WTC11 (cell line): ENCODE measurements at regions of chr1 and their contacts with region 1.

Region 1: GRCh38 chr1:202710070-202711045 is at the start of gene SYT2:
- DNase-seq: peak; percentile 78
- ATAC-seq: peak; percentile 41
- H3K4me3 Mint-ChIP-seq: peak within 1 kb of the TSS; percentile 77
- H3K27ac Mint-ChIP-seq: no peak within 1 kb of the TSS
- H3K4me1 Mint-ChIP-seq: peaks cover 36% of the 10 kb centered on the region
- H3K27me3 Mint-ChIP-seq: peaks cover 31% of the 10 kb centered on the region
- CTCF ChIP-seq: no peak
- total RNA-seq, gene SYT2: 9.5 to 12.1 TPM (median 9.6 TPM) in 3 replicates

Region 2: GRCh38 chr1:202692959-202693555 is 17.3 kb before region 1 on chr1:
- CTCF ChIA-PET with region 1: interaction called, 12 read pairs
- POLR2A ChIA-PET with region 1: interaction called, 5 read pairs
- DNase-seq: peak; percentile 90
- ATAC-seq: peak; percentile 81
- H3K4me3 Mint-ChIP-seq: no peak overlapping the region
- H3K27ac Mint-ChIP-seq: no peak overlapping the region
- H3K4me1 Mint-ChIP-seq: peaks cover 5% of the 10 kb centered on the region; the same call in 1 of the 2 replicates
- H3K27me3 Mint-ChIP-seq: no peaks in the 10 kb centered on the region
- CTCF ChIP-seq: no peak

Region 3: DNA sequence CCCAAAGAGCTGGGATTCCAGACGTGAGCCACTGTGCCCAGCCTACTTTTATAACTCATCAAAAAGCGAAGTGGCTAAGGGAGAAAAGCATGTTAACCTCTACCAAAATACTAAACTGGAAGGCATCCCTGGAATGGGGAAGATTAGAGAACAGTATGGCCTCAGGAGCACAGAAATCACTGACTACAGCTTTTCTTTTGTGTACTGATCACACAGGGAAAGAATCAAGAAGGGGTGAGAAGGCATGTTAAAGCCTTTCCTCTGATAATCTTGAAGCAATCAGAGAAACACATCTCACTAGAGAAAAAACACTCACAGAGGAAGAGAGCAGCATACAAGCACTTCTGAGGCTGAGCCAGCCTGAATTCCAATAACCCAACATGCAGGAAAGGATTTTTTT is 111.1 kb after region 1 on chr1:
- CTCF ChIA-PET with region 1: no interaction called
- POLR2A ChIA-PET with region 1: no interaction called
- DNase-seq: no peak
- ATAC-seq: no peak
- H3K4me3 Mint-ChIP-seq: no peak overlapping the region
- H3K27ac Mint-ChIP-seq: no peak overlapping the region
- H3K4me1 Mint-ChIP-seq: no peaks in the 10 kb centered on the region; the same call in 1 of the 2 replicates
- H3K27me3 Mint-ChIP-seq: peaks cover 15% of the 10 kb centered on the region
- CTCF ChIP-seq: no peak